Prostate gland (tissue), 2 donors: ENCODE measurements at regions of chr12 and their contacts with region 1.

Region 1: GRCh38 chr12:81257947-81258551 is 180.2 kb downstream of the ACSS3 start:
- DNase-seq: no peak
- H3K4me3 ChIP-seq: no peak overlapping the region
- H3K27ac ChIP-seq: no peak overlapping the region
- H3K4me1 ChIP-seq: no peaks in the 10 kb centered on the region
- H3K27me3 ChIP-seq: no peaks in the 10 kb centered on the region
- CTCF ChIP-seq: peak in 3 of 4 experiments; percentile 67 to 71 (median 69)
- POLR2A ChIP-seq: no peak

Region 2: GRCh38 chr12:80837348-80837985 is 420.6 kb before region 1 on chr12:
- intact Hi-C with region 1: loop called (anchors 5 kb)
- DNase-seq: peak; percentile 6
- H3K4me3 ChIP-seq: no peak overlapping the region
- H3K27ac ChIP-seq: no peak overlapping the region
- H3K4me1 ChIP-seq: no peaks in the 10 kb centered on the region
- H3K27me3 ChIP-seq: no peaks in the 10 kb centered on the region
- CTCF ChIP-seq: peak in 3 of 4 experiments; percentile 47 to 60 (median 56)
- POLR2A ChIP-seq: no peak

Region 3: GRCh38 chr12:81167694-81168093 is 90.4 kb before region 1 on chr12:
- intact Hi-C with region 1: no loop called
- DNase-seq: no peak
- H3K4me3 ChIP-seq: no peak overlapping the region
- H3K27ac ChIP-seq: no peak overlapping the region
- H3K4me1 ChIP-seq: no peaks in the 10 kb centered on the region
- H3K27me3 ChIP-seq: no peaks in the 10 kb centered on the region
- CTCF ChIP-seq: no peak
- POLR2A ChIP-seq: no peak

Region 4: DNA sequence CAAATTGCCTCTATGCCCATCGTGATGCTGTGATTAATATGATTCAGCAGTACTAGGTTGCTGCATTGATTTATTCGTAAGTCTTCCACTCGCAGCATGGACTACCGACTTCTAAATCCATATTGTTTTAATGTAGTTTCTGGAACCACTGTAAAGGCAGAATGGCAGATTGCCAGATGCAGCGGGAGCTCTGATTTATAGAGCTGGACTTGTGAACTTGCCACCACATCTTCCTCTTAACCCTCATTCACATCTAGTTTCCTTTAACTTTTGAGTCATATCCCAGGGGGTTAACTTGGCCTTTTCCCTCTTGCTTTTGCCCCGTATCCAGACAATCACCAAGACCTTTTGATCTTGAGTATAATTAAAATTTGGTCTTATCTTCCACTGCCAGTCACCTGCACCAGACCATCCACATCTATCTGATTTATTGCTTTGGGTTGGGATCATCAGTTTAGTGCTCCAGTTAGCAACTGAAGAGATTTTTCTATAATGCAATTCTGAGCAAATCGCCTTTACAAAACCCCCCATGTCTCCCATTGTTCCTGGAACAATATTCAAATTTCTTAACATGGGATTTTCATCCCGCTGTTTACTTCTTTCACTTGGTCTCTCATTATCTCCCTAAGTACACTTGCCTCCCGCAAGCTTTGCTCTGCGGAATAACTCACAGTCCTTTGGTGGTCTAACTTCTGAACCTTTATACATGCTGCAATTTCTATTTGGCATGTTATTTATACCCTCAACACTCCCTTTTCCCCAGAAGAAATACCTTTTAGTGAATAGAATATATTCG is 49.7 kb before region 1 on chr12:
- intact Hi-C with region 1: no loop called
- DNase-seq: no peak
- H3K4me3 ChIP-seq: no peak overlapping the region
- H3K27ac ChIP-seq: no peak overlapping the region
- H3K4me1 ChIP-seq: no peaks in the 10 kb centered on the region
- H3K27me3 ChIP-seq: no peaks in the 10 kb centered on the region
- CTCF ChIP-seq: no peak
- POLR2A ChIP-seq: no peak

Region 5: DNA sequence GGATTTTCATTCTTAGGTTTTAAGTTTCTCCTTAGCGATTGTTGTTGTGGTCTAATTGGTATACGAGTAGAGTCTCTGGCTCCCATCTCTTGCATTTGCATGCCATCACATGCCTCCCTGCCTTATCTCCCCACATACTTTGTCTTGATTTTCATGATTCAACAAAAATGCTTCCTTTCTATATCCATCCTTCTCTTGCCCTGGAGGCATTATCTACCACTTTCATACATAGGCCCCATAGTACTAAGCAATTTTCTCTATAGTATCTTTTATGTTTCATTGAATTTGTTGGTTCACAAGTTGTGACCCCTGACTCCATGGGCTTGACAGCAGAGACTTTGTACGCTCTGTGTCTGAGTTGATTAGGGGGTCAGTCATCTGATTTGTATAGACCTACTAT is 45.9 kb after region 1 on chr12:
- intact Hi-C with region 1: no loop called
- DNase-seq: no peak
- H3K4me3 ChIP-seq: no peak overlapping the region
- H3K27ac ChIP-seq: no peak overlapping the region
- H3K4me1 ChIP-seq: no peaks in the 10 kb centered on the region
- H3K27me3 ChIP-seq: no peaks in the 10 kb centered on the region
- CTCF ChIP-seq: no peak
- POLR2A ChIP-seq: no peak